PC-3 (cell line): ENCODE measurements at regions of chr9 and their contacts with region 1.

Region 1: DNA sequence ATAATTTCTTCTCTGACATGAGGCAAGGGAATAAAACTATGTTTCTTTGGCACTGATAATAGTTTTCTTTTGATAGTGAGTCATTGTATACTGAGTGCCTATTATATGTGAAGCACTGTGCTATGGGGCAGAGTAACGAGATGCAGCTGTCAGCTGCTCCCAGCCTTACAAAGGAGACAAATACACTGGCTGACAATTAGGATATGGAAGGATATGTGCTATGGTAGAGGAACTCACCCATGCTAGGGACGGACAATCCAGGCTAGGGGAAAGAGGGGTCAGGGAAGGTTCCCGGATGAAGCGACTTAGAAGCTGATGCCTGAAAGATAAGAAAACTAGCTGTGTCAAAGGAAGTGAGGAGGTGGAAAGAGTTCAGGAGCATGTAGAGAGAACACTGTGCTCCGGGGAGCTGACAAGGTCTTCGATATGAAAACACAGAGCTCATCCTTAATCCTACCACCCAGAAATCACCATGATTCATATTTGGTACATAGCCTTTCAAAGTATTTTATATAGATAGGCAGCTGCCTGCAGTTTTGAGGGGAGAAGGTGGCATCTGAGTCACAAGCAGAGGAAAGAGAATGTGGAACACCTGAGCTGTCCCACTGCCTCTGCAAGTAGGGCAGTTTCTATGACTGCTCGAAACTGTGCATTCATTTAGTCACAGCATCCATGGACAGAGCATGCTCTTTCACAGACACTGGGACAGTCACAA is 12.1 kb downstream of the BSPRY start:
- DNase-seq: peak; percentile 37
- ATAC-seq: peak; percentile 95
- H3K4me3 ChIP-seq: no peak overlapping the region
- H3K27ac ChIP-seq: no peak overlapping the region
- H3K4me1 ChIP-seq: peaks cover 13% of the 10 kb centered on the region
- H3K27me3 ChIP-seq: no peaks in the 10 kb centered on the region
- CTCF ChIP-seq: no peak

Region 2: DNA sequence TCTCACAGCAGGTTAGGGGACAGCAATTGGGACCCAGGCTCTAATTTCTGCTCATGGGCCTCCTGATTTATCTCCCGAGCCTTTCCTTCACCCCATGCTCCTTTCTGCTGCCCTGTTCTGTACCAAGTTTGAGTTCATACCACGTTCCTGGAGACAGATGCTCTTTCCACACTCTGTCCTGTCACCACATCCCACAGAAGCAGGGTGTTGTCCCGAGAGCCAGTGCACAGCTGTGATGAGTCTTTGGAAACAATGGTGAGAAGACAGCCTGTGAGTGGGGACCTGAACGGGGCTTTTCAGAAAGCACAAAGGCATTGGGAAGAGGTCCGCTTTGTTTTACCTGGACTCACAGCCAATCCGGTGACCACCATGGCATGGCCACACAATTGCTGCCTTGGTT is 38.8 kb before region 1 on chr9:
- CTCF ChIA-PET with region 1: no interaction called
- POLR2A ChIA-PET with region 1: interaction called, 20 read pairs
- intact Hi-C with region 1: no loop called
- DNase-seq: no peak
- ATAC-seq: no peak
- H3K4me3 ChIP-seq: no peak overlapping the region
- H3K27ac ChIP-seq: no peak overlapping the region
- H3K4me1 ChIP-seq: no peaks in the 10 kb centered on the region
- H3K27me3 ChIP-seq: no peaks in the 10 kb centered on the region
- CTCF ChIP-seq: no peak

Region 3: GRCh38 chr9:113343732-113344231 is 17.7 kb before region 1 on chr9:
- CTCF ChIA-PET with region 1: no interaction called
- POLR2A ChIA-PET with region 1: no interaction called
- intact Hi-C with region 1: no loop called
- DNase-seq: no peak
- ATAC-seq: no peak
- H3K4me3 ChIP-seq: no peak overlapping the region
- H3K27ac ChIP-seq: no peak overlapping the region
- H3K4me1 ChIP-seq: peaks cover 25% of the 10 kb centered on the region
- H3K27me3 ChIP-seq: no peaks in the 10 kb centered on the region
- CTCF ChIP-seq: no peak